Activated naive CD4-positive, alpha-beta T cell treated with anti-CD3 and anti-CD28 coated beads, Interleukin-2, amount 10 ng/mL, durations not matched to agents 7 days and 5 days (primary cell): ENCODE measurements at regions of chr11 and their contacts with region 1.

Region 1: DNA sequence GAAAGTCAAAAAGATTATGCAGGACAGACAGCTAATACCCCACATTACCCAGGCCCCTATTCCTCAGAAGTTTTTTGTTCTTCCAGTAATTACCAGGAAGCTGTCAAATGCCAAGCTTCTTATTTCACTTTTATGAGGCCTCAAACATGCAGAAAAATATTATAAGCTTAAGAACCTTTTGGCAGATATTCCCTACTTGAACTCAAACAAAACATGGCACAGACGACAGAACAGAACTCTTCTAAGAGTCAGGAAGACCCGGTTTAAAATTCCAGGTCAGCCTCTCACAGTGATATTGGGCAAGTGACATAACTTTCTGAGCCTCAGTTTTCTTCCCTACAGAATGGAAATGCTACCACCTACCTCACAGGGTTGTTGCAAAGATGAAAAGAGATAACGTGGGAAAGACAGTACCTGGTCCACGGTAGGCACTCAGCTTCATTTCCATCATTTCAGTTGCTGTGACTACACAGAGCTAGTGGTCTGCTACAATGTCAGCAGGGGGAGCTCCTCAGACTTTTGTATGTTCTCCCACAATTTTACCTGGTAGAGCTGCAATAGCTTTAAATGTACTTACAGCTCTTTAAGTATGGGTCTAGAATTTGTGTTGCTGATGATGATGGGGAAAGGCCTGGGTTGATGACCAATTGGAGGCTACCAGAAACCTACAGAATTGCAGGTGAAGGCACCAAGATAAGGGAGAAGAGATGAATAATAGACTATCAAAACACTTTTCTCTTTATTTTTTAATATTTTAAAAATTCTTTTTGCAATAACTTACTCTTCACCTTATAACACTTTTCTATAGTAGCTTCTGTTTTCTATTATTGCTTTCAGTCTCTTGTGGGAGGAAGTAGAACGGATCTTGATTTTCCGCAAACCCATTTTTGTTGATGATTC is 98.3 kb upstream of the CHRM4 start:
- DNase-seq: peak; percentile 61
- H3K4me3 Mint-ChIP-seq: no peak overlapping the region
- H3K27ac Mint-ChIP-seq: no peak overlapping the region
- H3K4me1 Mint-ChIP-seq: peaks cover 3% of the 10 kb centered on the region
- H3K27me3 Mint-ChIP-seq: no peaks in the 10 kb centered on the region

Region 2: GRCh38 chr11:46475926-46476545 is 13.9 kb before region 1 on chr11:
- CTCF ChIA-PET with region 1: interaction called, 10 read pairs
- DNase-seq: no peak
- H3K4me3 Mint-ChIP-seq: no peak overlapping the region
- H3K27ac Mint-ChIP-seq: peak overlapping the region; percentile 54
- H3K4me1 Mint-ChIP-seq: peaks cover 20% of the 10 kb centered on the region
- H3K27me3 Mint-ChIP-seq: no peaks in the 10 kb centered on the region

Region 3: DNA sequence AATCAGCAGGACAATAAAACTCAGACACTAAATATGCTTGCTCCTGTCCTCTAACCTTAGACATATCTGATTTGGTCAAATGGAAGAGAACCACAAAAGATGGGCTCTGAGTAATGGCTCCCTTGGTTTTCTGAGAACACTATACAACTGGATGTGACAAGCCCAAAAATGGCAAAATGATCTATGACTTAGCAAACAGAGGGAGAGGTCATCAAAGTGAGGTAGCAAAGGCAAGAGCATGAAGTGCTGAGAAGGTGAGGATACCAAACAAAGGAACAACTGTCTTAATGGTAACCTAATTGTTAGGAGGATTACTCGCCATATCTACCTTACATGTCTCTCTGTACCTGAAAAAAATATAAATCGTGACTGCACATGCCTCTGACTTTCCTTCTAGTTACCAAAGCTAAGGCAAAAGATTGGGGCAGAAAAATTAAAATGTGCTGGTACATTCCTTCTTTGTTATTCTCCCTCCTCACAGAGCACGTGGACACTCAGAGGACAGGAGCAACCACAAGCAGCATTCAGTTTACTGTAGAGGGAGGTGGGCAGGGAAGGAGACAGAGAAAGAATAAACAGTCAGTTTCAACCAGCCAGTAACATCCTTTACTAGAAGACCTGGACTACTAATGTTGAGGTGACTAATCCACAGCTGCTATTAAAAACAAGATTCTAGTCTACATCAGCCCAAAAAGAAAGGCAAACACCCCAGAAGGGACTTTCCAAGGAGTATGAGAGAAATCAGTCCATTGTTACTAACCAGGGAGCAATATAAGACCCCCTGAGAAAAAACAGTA is 15.1 kb after region 1 on chr11:
- CTCF ChIA-PET with region 1: interaction called, 53 read pairs
- DNase-seq: no peak
- H3K4me3 Mint-ChIP-seq: no peak overlapping the region
- H3K27ac Mint-ChIP-seq: peak overlapping the region; percentile 7
- H3K4me1 Mint-ChIP-seq: peaks cover 12% of the 10 kb centered on the region
- H3K27me3 Mint-ChIP-seq: no peaks in the 10 kb centered on the region

Region 4: GRCh38 chr11:46521961-46522681 is 32.2 kb after region 1 on chr11:
- CTCF ChIA-PET with region 1: interaction called, 10 read pairs
- DNase-seq: no peak
- H3K4me3 Mint-ChIP-seq: no peak overlapping the region
- H3K27ac Mint-ChIP-seq: no peak overlapping the region
- H3K4me1 Mint-ChIP-seq: no peaks in the 10 kb centered on the region
- H3K27me3 Mint-ChIP-seq: no peaks in the 10 kb centered on the region

Region 5: DNA sequence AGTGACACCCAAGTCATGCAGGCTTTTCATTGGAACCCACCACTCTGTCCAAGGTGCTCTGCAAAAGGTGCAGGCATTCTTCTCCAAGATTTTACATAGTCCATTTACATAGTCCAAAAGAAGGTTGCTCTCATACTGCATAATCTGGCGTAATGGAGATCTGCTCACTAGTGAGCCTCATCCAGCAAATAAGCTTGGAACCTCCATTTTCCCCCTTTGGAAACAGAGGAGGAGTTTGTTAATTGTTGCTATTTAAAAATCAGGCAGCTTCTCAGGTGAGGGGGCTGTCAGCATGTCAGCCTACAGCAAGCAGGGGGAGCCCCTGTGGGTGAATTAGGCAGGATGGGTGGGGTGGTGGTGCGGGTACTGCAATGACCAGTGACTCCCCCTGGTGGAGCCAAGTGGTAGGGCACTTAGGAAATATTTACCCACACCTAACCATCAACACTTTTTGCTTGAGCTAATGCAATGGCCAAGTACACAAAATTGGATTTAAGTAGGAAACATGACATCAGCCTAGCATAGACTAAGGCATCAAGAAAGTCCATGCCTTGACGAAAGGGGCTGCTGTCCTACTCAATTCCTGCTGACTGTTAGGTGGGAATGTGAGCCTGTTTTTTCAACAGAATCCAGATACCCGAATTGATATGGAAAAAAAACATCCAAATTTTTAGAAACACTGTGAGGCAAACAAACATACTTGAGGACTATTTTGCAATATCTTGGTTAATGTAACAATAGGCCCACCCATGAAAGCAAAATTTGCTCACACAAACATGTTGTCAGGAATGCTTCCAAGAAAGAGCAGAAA is 39.4 kb after region 1 on chr11:
- CTCF ChIA-PET with region 1: interaction called, 34 read pairs
- DNase-seq: peak; percentile 82
- H3K4me3 Mint-ChIP-seq: no peak overlapping the region
- H3K27ac Mint-ChIP-seq: peak overlapping the region; percentile 70
- H3K4me1 Mint-ChIP-seq: peaks cover 20% of the 10 kb centered on the region
- H3K27me3 Mint-ChIP-seq: no peaks in the 10 kb centered on the region

Region 6: GRCh38 chr11:46616998-46617675 is 127.2 kb after region 1 on chr11 and contains the starts of genes ATG13 and HARBI1:
- CTCF ChIA-PET with region 1: interaction called, 23 read pairs
- DNase-seq: peak; percentile 95
- H3K4me3 Mint-ChIP-seq: peak within 1 kb of the TSS; percentile 91
- H3K27ac Mint-ChIP-seq: peak within 1 kb of the TSS; percentile 98
- H3K4me1 Mint-ChIP-seq: peaks cover 38% of the 10 kb centered on the region
- H3K27me3 Mint-ChIP-seq: no peaks in the 10 kb centered on the region